ENCODE measurements at regions of chr9 and their contacts with region 1.

Region 1: GRCh38 chr9:127862075-127863011 is 7.9 kb upstream of the ENG start:
- DNase-seq: peak; percentile 89 to 93 (median 91)
- ATAC-seq: peak; percentile 89
- H3K4me3 ChIP-seq: no peak overlapping the region; the same call in 1 of the 2 replicates
- H3K27ac ChIP-seq: peak overlapping the region; percentile 91
- H3K4me1 ChIP-seq: peaks cover 57 to 83% of the 10 kb centered on the region in 2 experiments
- H3K27me3 ChIP-seq: no peaks in the 10 kb centered on the region
- CTCF ChIP-seq: no peak
- EP300 ChIP-seq: peak; percentile 84
- POLR2A ChIP-seq: peak; percentile 62
- RAD21 ChIP-seq: no peak; a peak in 1 of 4 replicates

Region 2: DNA sequence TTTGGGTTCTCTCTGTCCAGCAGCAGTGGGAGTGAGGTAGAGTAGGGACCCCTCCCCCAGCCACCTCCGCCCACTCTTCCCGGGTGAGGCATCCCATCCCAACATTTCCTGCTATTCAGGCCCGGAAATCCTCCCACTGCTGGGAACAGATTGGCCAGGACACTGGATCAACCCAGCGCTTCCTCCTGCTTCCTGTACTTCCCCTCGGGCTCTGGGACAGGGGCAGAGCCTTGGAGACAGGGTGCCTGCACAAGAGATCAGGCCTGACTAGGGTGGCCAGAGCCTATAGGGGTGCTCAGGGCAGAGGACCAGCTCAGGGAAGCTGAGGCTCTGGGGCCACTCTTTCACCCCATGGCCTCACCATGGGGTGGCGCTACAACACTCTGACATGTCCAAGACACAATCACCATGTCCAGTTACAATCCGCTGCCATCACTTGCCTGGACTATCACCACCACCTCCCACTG is 98.4 kb before region 1 on chr9:
- CTCF ChIA-PET with region 1: no interaction called
- POLR2A ChIA-PET with region 1: interaction called, 3 read pairs
- in situ Hi-C with region 1: no loop called
- intact Hi-C with region 1: loop called (anchors 1 kb)
- DNase-seq: peak; percentile 48 to 85 (median 62)
- ATAC-seq: peak; percentile 96
- H3K4me3 ChIP-seq: no peak overlapping the region
- H3K27ac ChIP-seq: no peak overlapping the region
- H3K4me1 ChIP-seq: peaks cover 13 to 32% of the 10 kb centered on the region in 2 experiments
- H3K27me3 ChIP-seq: no peaks in the 10 kb centered on the region; a peak in 1 of 5 replicates
- CTCF ChIP-seq: peak; percentile 78 to 85 (median 84)
- EP300 ChIP-seq: no peak
- POLR2A ChIP-seq: no peak
- RAD21 ChIP-seq: peak; percentile 58 to 91

Region 3: GRCh38 chr9:127793093-127793708 is 69.1 kb before region 1 on chr9:
- CTCF ChIA-PET with region 1: no interaction called
- POLR2A ChIA-PET with region 1: interaction called, 16 read pairs
- in situ Hi-C with region 1: no loop called
- intact Hi-C with region 1: no loop called
- DNase-seq: peak in 1 of 4 experiments; percentile 15
- ATAC-seq: peak; percentile 39
- H3K4me3 ChIP-seq: no peak overlapping the region
- H3K27ac ChIP-seq: no peak overlapping the region
- H3K4me1 ChIP-seq: peaks cover 2 to 26% of the 10 kb centered on the region in 2 experiments; a peak in 4 of 5 replicates
- H3K27me3 ChIP-seq: no peaks in the 10 kb centered on the region
- CTCF ChIP-seq: no peak
- EP300 ChIP-seq: no peak
- POLR2A ChIP-seq: no peak
- RAD21 ChIP-seq: no peak

Region 4: GRCh38 chr9:127828262-127829031 is 33.9 kb before region 1 on chr9:
- CTCF ChIA-PET with region 1: no interaction called
- POLR2A ChIA-PET with region 1: interaction called, 7 read pairs
- in situ Hi-C with region 1: no loop called
- intact Hi-C with region 1: loop called (anchors 1 kb)
- DNase-seq: peak; percentile 94 to 96 (median 95)
- ATAC-seq: peak; percentile 94
- H3K4me3 ChIP-seq: peak overlapping the region; percentile 32
- H3K27ac ChIP-seq: peak overlapping the region; percentile 86
- H3K4me1 ChIP-seq: peaks cover 29 to 40% of the 10 kb centered on the region in 2 experiments
- H3K27me3 ChIP-seq: no peaks in the 10 kb centered on the region
- CTCF ChIP-seq: peak in 2 of 3 experiments; percentile 39 to 52; a peak in 4 of 6 replicates
- EP300 ChIP-seq: no peak
- POLR2A ChIP-seq: peak; percentile 89
- RAD21 ChIP-seq: peak in 1 of 2 experiments; percentile 35; a peak in 1 of 4 replicates

Measured in K562 (cell line).